Heart left ventricle (tissue), 16 donors: ENCODE measurements at regions of chr5 and their contacts with region 1.

Region 1: DNA sequence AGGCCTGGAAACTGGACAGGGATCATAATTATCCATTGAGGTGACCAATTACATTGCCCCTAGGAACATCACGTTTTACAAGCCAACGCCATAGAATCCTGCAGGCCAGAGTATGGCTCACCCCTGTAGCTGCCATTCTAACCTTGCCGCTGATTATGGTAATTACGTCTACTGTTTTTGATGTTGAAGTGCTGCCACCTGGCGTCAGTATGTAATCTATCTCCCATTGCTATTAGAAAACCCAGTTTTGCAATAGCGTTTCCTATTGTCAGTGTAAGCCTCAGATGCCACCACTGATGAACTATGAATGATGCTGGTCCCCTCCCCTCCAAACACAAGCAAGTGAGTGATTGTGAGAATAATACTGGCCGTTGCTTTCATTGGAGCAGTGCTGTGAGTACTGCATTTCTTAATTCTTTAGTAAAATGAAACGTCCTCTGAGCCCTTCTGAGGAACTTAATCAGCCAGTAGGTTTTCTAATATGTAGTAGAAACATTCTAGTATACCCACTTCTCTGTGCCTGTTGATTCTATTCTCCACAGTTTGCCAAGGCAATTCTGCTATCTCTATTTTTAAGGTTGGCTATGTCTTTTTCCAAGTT is 100.5 kb upstream of the NMUR2 start:
- DNase-seq: peak in 4 of 5 donors; percentile 32 to 50 (median 43)
- ATAC-seq: peak; percentile 42 to 89 (median 78)
- H3K4me3 ChIP-seq: no peak overlapping the region
- H3K27ac ChIP-seq: no peak overlapping the region
- H3K4me1 ChIP-seq: no peaks in the 10 kb centered on the region
- H3K27me3 ChIP-seq: peaks cover 0 to 6% (median 0%) of the 10 kb centered on the region in 9 donors
- CTCF ChIP-seq: peak; percentile 49 to 72 (median 56)
- POLR2A ChIP-seq: no peak

Region 2: GRCh38 chr5:151825445-151825844 is 680.1 kb before region 1 on chr5:
- intact Hi-C with region 1: loop called (anchors 2 to 5 kb)
- DNase-seq: peak in 4 of 5 donors; percentile 44 to 72 (median 56)
- ATAC-seq: peak; percentile 88 to 94 (median 90)
- H3K4me3 ChIP-seq: no peak overlapping the region
- H3K27ac ChIP-seq: no peak overlapping the region
- H3K4me1 ChIP-seq: peaks cover 0 to 17% (median 1%) of the 10 kb centered on the region in 12 donors
- H3K27me3 ChIP-seq: no peaks in the 10 kb centered on the region
- CTCF ChIP-seq: peak; percentile 74 to 93 (median 88)
- POLR2A ChIP-seq: no peak

Region 3: GRCh38 chr5:151970885-151971284 is 534.7 kb before region 1 on chr5:
- intact Hi-C with region 1: no loop called
- DNase-seq: no peak
- ATAC-seq: no peak
- H3K4me3 ChIP-seq: no peak overlapping the region
- H3K27ac ChIP-seq: no peak overlapping the region
- H3K4me1 ChIP-seq: no peaks in the 10 kb centered on the region
- H3K27me3 ChIP-seq: no peaks in the 10 kb centered on the region
- CTCF ChIP-seq: no peak
- POLR2A ChIP-seq: no peak

Region 4: GRCh38 chr5:152151940-152152339 is 353.6 kb before region 1 on chr5:
- intact Hi-C with region 1: loop called in 3 of 10 experiments (anchors 10 kb)
- DNase-seq: no peak
- ATAC-seq: no peak
- H3K4me3 ChIP-seq: no peak overlapping the region
- H3K27ac ChIP-seq: no peak overlapping the region
- H3K4me1 ChIP-seq: no peaks in the 10 kb centered on the region
- H3K27me3 ChIP-seq: no peaks in the 10 kb centered on the region
- CTCF ChIP-seq: no peak
- POLR2A ChIP-seq: no peak

Region 5: GRCh38 chr5:152364899-152365298 is 140.6 kb before region 1 on chr5:
- intact Hi-C with region 1: loop called in 4 of 10 experiments (anchors 10 kb)
- DNase-seq: no peak
- ATAC-seq: peak in 1 of 4 donors; percentile 63
- H3K4me3 ChIP-seq: no peak overlapping the region
- H3K27ac ChIP-seq: no peak overlapping the region
- H3K4me1 ChIP-seq: no peaks in the 10 kb centered on the region
- H3K27me3 ChIP-seq: no peaks in the 10 kb centered on the region
- CTCF ChIP-seq: no peak
- POLR2A ChIP-seq: no peak

Region 6: DNA sequence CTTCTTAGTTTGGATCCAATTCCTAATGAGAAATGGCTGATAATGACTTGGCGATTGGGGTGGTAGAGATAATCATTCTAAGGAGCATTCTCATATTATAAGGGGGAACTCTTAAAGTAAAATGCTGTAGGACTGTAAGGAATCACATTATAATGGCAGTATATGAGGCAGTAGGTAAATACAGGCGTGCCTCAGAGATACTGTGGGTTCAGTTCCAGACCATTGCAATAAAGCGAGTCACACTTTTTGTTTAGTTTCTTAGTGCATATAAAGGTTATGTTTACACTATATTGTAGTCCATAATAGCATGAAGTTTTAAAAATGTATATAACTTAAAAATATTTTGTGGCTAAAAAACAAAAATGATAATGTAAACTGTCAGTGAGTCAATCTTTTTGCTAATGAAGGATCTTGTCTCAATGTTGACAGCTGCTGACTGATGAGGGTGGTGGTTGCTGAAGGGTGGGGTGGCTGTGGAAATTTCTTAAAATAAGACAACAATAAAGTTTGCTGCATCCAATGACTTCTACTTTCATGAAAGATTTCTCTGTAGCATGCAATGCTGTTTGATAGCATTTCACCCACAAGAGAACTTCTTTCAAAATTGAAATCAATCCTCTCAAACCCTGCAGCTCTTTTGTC is 116.2 kb before region 1 on chr5:
- intact Hi-C with region 1: loop called in 1 of 10 experiments (anchors 10 kb)
- DNase-seq: no peak
- ATAC-seq: no peak
- H3K4me3 ChIP-seq: no peak overlapping the region
- H3K27ac ChIP-seq: no peak overlapping the region
- H3K4me1 ChIP-seq: peaks cover 0 to 5% (median 0%) of the 10 kb centered on the region in 12 donors
- H3K27me3 ChIP-seq: no peaks in the 10 kb centered on the region
- CTCF ChIP-seq: no peak
- POLR2A ChIP-seq: no peak